ENCODE measurements at regions of chr9 and their contacts with region 1.

Region 1: DNA sequence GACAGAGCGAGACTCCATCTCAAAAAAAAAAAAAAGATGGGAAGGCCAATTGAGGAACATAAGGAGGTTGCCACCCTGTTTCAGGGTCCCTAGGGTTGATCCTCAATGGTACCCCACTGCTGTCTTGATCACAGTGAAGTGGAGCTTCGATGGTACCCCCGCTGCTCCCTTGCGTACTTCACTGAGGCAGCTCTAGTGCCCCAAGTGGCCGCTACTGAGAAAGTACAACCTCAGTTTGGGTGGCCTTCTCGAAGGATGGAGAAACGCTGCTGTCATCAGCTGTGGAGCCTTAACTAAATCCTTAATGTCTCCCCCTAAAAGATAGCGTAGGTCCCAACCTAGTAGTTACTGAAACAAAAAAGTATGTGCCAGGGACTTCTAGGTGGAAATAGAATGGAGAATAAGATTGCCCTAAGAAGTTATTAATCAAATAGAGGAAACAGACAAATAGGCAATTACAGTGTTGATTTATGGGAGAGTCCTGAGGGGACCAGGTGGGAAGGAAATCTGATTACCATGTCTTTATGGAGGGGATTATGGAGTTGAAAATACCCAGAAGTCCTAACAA is 6.3 kb downstream of the TESK1 start:
- DNase-seq: peak; percentile 61
- H3K4me3 Mint-ChIP-seq: no peak overlapping the region
- H3K27ac Mint-ChIP-seq: no peak overlapping the region
- H3K4me1 Mint-ChIP-seq: peaks cover 23% of the 10 kb centered on the region
- H3K27me3 Mint-ChIP-seq: peaks cover 11% of the 10 kb centered on the region

Region 2: DNA sequence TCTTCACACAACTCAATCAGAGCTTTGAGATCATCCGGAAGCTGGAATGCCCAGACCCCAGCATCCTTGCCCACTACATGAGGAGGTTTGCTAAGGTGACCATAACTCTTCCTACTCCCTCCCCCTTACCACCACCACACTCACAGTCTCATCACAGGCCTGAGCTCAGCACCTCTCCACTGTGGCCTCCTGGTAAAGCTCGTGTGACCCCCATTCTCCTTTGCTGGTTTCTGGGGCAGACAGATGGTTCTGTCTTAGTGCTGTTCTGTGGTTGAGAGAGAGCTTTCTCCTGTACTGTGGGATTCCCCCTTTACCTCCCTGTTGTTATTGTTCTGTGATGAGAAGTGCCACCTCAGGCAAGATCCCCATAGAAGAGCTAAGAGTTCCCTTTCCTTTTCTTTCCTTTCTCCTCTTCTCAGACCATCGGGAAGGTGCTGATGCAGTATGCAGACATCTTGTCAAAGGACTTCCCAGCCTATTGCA is 214.1 kb before region 1 on chr9:
- CTCF ChIA-PET with region 1: no interaction called
- POLR2A ChIA-PET with region 1: no interaction called
- DNase-seq: no peak
- H3K4me3 Mint-ChIP-seq: no peak overlapping the region
- H3K27ac Mint-ChIP-seq: no peak overlapping the region
- H3K4me1 Mint-ChIP-seq: no peaks in the 10 kb centered on the region
- H3K27me3 Mint-ChIP-seq: peaks cover 3% of the 10 kb centered on the region

Region 3: DNA sequence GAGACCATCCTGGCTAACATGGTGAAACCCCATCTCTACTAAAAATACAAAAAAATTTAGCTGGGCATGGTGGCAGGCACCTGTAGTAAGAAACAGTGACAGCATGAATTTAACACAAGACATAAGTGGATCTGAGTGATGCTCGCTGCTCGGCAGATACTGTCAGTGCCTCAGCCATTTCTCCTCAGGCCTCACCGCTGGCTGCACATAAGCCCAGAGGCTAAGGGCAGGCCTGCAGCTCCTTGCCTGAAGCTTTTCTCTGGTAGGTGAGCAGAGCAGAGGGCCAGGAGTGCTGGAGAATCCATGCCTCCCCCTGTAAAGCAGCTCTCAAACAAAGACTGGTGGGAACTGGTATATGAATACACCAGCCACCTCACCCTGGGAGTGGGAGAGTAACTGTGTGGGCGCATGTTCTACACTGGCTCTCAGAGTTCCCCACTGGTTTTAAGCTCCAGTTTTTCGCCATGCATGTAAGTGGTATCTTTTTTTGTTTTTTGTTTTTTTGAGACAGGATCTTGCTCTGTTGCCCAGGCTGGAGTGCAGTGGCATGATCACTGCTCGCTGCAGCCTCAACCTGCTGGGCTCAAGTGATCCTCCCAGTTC is 17.2 kb after region 1 on chr9:
- CTCF ChIA-PET with region 1: interaction called, 98 read pairs
- POLR2A ChIA-PET with region 1: no interaction called
- DNase-seq: no peak
- H3K4me3 Mint-ChIP-seq: no peak overlapping the region
- H3K27ac Mint-ChIP-seq: no peak overlapping the region
- H3K4me1 Mint-ChIP-seq: no peaks in the 10 kb centered on the region
- H3K27me3 Mint-ChIP-seq: no peaks in the 10 kb centered on the region